Left ventricle myocardium inferior (tissue), 1 donor: ENCODE measurements at regions of chr9 and their contacts with region 1.

Region 1: GRCh38 chr9:118829334-118829733 is 539.9 kb downstream of the BRINP1 start:
- DNase-seq: no peak
- H3K4me3 ChIP-seq: no peak overlapping the region
- H3K27ac ChIP-seq: no peak overlapping the region
- H3K4me1 ChIP-seq: no peaks in the 10 kb centered on the region
- H3K27me3 ChIP-seq: no peaks in the 10 kb centered on the region
- CTCF ChIP-seq: peak; percentile 70

Region 2: GRCh38 chr9:118882684-118883083 is 53.4 kb after region 1 on chr9:
- intact Hi-C with region 1: no loop called
- DNase-seq: no peak
- H3K4me3 ChIP-seq: no peak overlapping the region
- H3K27ac ChIP-seq: no peak overlapping the region
- H3K4me1 ChIP-seq: no peaks in the 10 kb centered on the region
- H3K27me3 ChIP-seq: no peaks in the 10 kb centered on the region
- CTCF ChIP-seq: no peak

Region 3: DNA sequence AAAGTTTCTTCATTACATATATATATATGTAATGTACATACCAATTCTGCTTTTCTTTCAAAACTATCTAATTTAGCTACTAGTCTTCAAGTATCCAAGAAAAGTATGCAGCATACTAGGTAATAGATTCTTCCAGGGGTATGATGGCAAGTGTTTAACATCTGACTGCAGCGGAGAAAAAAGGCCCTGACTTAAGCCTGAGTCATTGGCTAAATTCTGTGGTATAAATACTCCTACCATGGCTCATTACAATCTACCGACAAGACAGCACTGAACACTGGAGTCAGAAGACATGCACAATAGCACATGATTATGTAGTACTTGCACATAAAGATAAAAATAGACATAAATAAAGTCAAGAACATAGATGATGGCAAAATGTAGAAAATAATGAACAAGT is 100.0 kb after region 1 on chr9:
- intact Hi-C with region 1: no loop called
- DNase-seq: no peak
- H3K4me3 ChIP-seq: no peak overlapping the region
- H3K27ac ChIP-seq: no peak overlapping the region
- H3K4me1 ChIP-seq: peaks cover 8% of the 10 kb centered on the region
- H3K27me3 ChIP-seq: no peaks in the 10 kb centered on the region
- CTCF ChIP-seq: no peak

Region 4: DNA sequence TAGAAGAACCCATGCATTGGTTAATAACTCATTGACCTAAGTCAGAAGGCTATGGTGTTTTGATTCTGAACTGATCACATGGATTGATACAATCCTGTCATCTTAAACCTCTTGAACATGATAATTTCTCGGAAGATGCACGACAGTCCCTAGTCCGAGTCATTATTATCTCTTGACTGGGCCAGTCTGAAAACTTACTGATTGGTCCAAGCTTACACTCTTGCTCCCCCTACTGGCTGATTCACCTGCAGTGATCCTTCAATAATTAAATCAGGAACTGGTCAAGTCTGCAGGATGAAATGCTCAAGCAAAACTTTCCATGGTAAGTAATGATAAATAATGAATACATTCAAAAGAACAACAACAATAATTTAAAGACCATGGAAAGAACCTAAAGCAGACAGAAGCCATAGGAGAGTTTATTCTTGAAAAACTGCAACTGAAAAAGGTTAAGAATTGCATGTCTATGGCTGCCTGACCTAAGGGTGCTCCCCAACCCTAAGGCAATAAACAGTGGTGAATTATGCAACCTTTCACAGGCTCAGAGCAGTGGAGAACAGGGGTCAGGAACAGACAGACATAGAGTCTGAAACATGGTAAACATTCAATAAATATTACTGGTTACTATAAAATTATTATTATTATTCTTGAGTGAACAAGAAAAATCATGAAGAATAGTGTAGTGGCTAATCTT is 460.6 kb after region 1 on chr9:
- intact Hi-C with region 1: loop called (anchors 5 kb)
- DNase-seq: no peak
- H3K4me3 ChIP-seq: no peak overlapping the region
- H3K27ac ChIP-seq: no peak overlapping the region
- H3K4me1 ChIP-seq: no peaks in the 10 kb centered on the region
- H3K27me3 ChIP-seq: no peaks in the 10 kb centered on the region
- CTCF ChIP-seq: peak; percentile 86

Region 5: DNA sequence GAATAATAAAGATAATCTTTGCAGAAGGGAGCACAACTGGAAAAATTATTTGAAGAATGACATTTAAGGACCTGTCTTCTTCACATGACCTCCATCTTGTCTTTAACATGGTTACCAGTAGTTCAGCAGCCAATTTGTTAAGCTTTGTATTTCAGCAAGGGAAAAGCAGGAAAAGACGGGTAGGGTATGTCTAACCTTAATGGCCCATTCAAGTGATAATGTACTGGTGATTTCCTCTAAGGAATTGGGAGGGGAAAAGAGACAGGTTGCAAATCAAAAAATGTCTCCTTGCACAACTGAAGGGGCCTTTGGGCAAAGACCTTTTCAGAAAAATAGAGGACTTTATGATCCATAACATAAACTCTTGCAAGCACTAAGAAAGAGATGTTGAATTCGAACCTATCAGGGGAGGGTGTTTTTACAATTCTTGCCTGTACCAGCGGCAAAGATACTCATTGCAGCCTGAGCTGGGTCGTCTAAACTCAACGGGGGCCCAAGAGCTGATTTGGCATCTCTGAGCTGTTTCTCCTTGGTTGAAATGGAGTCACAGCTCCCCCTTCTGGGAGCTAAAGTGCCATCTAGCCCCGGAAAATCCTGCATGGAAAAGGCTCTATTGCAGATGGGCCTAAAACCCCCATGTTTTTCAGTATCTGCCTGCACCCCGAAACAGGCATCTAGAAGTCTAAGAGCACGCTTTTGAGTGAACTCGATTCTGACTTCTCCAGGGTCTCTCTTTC is 536.1 kb after region 1 on chr9:
- intact Hi-C with region 1: loop called (anchors 5 kb)
- DNase-seq: no peak
- H3K4me3 ChIP-seq: no peak overlapping the region
- H3K27ac ChIP-seq: no peak overlapping the region
- H3K4me1 ChIP-seq: peaks cover 13% of the 10 kb centered on the region
- H3K27me3 ChIP-seq: peaks cover 47% of the 10 kb centered on the region
- CTCF ChIP-seq: peak; percentile 67